ENCODE measurements at regions of chr4 and their contacts with region 1.

Region 1: GRCh38 chr4:183485401-183486160 is 19.3 kb upstream of the ING2 start:
- DNase-seq: no peak
- H3K4me3 Mint-ChIP-seq: no peak overlapping the region
- H3K27ac Mint-ChIP-seq: no peak overlapping the region
- H3K4me1 Mint-ChIP-seq: no peaks in the 10 kb centered on the region
- H3K27me3 Mint-ChIP-seq: no peaks in the 10 kb centered on the region

Region 2: GRCh38 chr4:183458005-183458404 is 27.6 kb before region 1 on chr4:
- CTCF ChIA-PET with region 1: no interaction called
- POLR2A ChIA-PET with region 1: interaction called, 13 read pairs
- DNase-seq: no peak
- H3K4me3 Mint-ChIP-seq: no peak overlapping the region
- H3K27ac Mint-ChIP-seq: no peak overlapping the region
- H3K4me1 Mint-ChIP-seq: peaks cover 19% of the 10 kb centered on the region
- H3K27me3 Mint-ChIP-seq: no peaks in the 10 kb centered on the region

Region 3: DNA sequence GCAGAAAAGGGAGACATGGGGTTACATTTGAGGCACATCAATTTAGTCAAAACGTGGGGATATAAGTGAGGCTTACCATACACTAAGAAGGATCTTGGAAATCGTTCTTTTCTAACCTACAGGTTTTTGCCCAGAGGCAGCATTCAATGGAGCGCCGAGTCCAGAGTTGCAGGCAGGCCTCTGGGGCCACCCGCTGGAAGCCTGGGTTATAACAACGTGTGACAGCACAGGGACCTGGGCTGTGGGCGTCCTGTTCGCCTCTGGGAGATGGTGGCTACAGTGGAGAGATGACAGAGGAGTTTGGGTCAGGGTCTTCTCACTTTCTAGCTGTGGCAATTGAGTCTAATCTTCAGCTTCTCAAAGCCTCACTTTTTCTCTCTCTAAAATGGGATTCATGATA is 678.2 kb after region 1 on chr4:
- CTCF ChIA-PET with region 1: no interaction called
- POLR2A ChIA-PET with region 1: no interaction called
- DNase-seq: no peak
- H3K4me3 Mint-ChIP-seq: no peak overlapping the region
- H3K27ac Mint-ChIP-seq: no peak overlapping the region
- H3K4me1 Mint-ChIP-seq: peaks cover 2% of the 10 kb centered on the region
- H3K27me3 Mint-ChIP-seq: peaks cover 68% of the 10 kb centered on the region

Measured in activated CD4-positive, alpha-beta T cell treated with anti-CD3 and anti-CD28 coated beads, Interleukin-2, amount 10 ng/mL, durations not matched to agents 7 days and 5 days (primary cell).